A673 (cell line): ENCODE measurements at regions of chr1 and their contacts with region 1.

Region 1: GRCh38 chr1:223683586-223684487 is 18.3 kb upstream of the CAPN8 start:
- DNase-seq: peak; percentile 69
- H3K4me3 ChIP-seq: no peak overlapping the region
- H3K27ac ChIP-seq: no peak overlapping the region
- H3K4me1 ChIP-seq: no peaks in the 10 kb centered on the region
- H3K27me3 ChIP-seq: peaks cover 6% of the 10 kb centered on the region
- CTCF ChIP-seq: peak; percentile 78

Region 2: DNA sequence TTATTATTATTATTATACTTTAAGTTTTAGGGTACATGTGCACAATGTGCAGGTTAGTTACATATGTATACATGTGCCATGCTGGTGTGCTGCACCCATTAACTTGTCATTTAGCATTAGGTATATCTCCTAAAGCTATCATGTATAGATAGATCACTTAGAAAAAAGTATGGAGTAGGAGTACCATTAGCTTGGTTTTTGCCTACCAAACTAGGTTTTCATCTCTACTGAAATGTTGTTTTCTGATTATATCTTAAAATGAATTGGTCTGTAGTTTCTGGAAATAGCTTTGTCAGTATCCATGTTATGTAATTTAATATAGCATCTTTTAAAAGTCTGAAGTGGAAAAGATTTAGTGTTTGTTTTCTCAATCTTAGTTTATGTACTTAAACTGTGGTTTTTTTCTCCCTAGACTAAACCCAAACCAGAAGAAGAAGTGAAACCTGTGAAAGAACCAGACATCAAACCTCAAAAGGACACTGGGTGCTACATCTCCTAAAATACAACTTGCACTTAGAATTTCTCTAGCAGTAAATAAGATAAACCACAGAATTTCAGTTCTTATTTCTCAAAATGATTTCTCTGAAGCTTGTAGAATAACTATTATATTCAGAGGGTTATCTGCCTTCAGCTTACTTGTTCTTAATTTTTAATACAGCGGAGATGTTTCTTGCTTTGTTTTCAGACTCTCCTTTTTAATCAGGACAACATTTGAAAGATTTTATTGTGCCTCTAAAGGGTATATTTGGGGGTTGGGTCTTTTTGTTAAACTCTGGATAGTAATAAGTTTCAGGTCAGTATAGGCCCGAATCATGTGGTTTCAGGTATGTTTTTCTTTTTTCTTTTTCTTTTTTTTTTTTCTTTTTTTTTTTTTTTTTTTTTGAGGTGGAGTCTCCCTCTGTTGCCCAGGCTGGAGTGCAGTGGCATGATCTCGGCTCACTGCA is 951.3 kb before region 1 on chr1:
- CTCF ChIA-PET with region 1: no interaction called
- POLR2A ChIA-PET with region 1: no interaction called
- intact Hi-C with region 1: loop called (anchors 10 kb)
- DNase-seq: no peak
- H3K4me3 ChIP-seq: no peak overlapping the region
- H3K27ac ChIP-seq: no peak overlapping the region
- H3K4me1 ChIP-seq: no peaks in the 10 kb centered on the region
- H3K27me3 ChIP-seq: no peaks in the 10 kb centered on the region
- CTCF ChIP-seq: no peak

Region 3: GRCh38 chr1:222792744-222793143 is 891.1 kb before region 1 on chr1:
- CTCF ChIA-PET with region 1: no interaction called
- POLR2A ChIA-PET with region 1: no interaction called
- intact Hi-C with region 1: loop called (anchors 5 kb)
- DNase-seq: peak; percentile 33
- H3K4me3 ChIP-seq: no peak overlapping the region
- H3K27ac ChIP-seq: no peak overlapping the region
- H3K4me1 ChIP-seq: no peaks in the 10 kb centered on the region
- H3K27me3 ChIP-seq: no peaks in the 10 kb centered on the region
- CTCF ChIP-seq: peak; percentile 65

Region 4: GRCh38 chr1:223531742-223532341 is 152.0 kb before region 1 on chr1:
- CTCF ChIA-PET with region 1: interaction called, 3 read pairs
- POLR2A ChIA-PET with region 1: no interaction called
- intact Hi-C with region 1: loop called (anchors 1 kb)
- DNase-seq: peak; percentile 70
- H3K4me3 ChIP-seq: no peak overlapping the region
- H3K27ac ChIP-seq: no peak overlapping the region
- H3K4me1 ChIP-seq: no peaks in the 10 kb centered on the region
- H3K27me3 ChIP-seq: no peaks in the 10 kb centered on the region
- CTCF ChIP-seq: peak; percentile 95

Region 5: GRCh38 chr1:223543560-223543959 is 140.3 kb before region 1 on chr1:
- CTCF ChIA-PET with region 1: no interaction called
- POLR2A ChIA-PET with region 1: no interaction called
- intact Hi-C with region 1: no loop called
- DNase-seq: no peak
- H3K4me3 ChIP-seq: no peak overlapping the region
- H3K27ac ChIP-seq: no peak overlapping the region
- H3K4me1 ChIP-seq: no peaks in the 10 kb centered on the region
- H3K27me3 ChIP-seq: no peaks in the 10 kb centered on the region
- CTCF ChIP-seq: no peak